A549 (cell line): ENCODE measurements at regions of chr20 and their contacts with region 1.

Region 1: GRCh38 chr20:24917797-24918578 is 31.1 kb upstream of the CST7 start:
- DNase-seq: peak; percentile 73 to 80
- ATAC-seq: peak; percentile 77 to 98
- H3K4me3 ChIP-seq: no peak overlapping the region
- H3K27ac ChIP-seq: peak overlapping the region in 1 of 2 experiments; percentile 50; a peak in 1 of 6 replicates
- H3K4me1 ChIP-seq: no peaks in the 10 kb centered on the region
- CTCF ChIP-seq: peak; percentile 88
- EP300 ChIP-seq: no peak
- POLR2A ChIP-seq: no peak
- RAD21 ChIP-seq: peak; percentile 98

Region 2: DNA sequence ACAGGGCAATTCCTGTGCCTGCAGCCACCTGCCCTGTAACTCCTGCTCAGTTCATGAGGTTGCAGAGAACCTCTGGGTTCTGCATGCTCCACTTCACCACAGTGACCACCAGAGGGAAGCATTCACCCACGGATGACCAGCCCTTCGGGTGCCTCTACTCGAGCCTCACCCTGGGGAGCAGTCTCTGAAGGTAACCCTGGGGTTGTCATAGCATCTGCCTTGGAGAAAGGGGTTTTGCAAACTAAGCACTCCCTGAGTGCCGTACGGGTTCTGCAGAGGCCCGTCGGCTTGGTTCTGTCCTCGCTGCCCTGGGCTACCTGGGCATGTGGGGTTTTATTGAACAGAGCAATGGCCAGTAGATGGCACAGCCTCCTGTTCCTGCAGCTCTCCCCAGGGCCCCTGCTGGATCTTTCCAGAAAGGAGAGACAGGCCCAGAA is 1028.2 kb before region 1 on chr20:
- CTCF ChIA-PET with region 1: interaction called, 15 read pairs
- POLR2A ChIA-PET with region 1: no interaction called
- DNase-seq: peak; percentile 63 to 68
- ATAC-seq: peak; percentile 98 to 100
- H3K4me3 ChIP-seq: no peak overlapping the region
- H3K27ac ChIP-seq: no peak overlapping the region
- H3K4me1 ChIP-seq: no peaks in the 10 kb centered on the region
- CTCF ChIP-seq: peak; percentile 90
- EP300 ChIP-seq: no peak
- POLR2A ChIP-seq: no peak
- RAD21 ChIP-seq: peak; percentile 90

Region 3: GRCh38 chr20:24100385-24101011 is 817.5 kb before region 1 on chr20:
- CTCF ChIA-PET with region 1: interaction called, 15 read pairs
- POLR2A ChIA-PET with region 1: no interaction called
- DNase-seq: peak in 1 of 2 experiments; percentile 77
- ATAC-seq: peak; percentile 76 to 88
- H3K4me3 ChIP-seq: no peak overlapping the region
- H3K27ac ChIP-seq: peak overlapping the region in 1 of 2 experiments; percentile 27; a peak in 1 of 6 replicates
- H3K4me1 ChIP-seq: peaks cover 41% of the 10 kb centered on the region
- CTCF ChIP-seq: peak; percentile 58
- EP300 ChIP-seq: no peak
- POLR2A ChIP-seq: no peak
- RAD21 ChIP-seq: peak; percentile 29 to 63; a peak in 3 of 5 replicates

Region 4: GRCh38 chr20:24658920-24659660 is 258.9 kb before region 1 on chr20:
- CTCF ChIA-PET with region 1: no interaction called
- POLR2A ChIA-PET with region 1: no interaction called
- DNase-seq: no peak
- ATAC-seq: no peak
- H3K4me3 ChIP-seq: no peak overlapping the region
- H3K27ac ChIP-seq: no peak overlapping the region
- H3K4me1 ChIP-seq: peaks cover 17% of the 10 kb centered on the region
- CTCF ChIP-seq: no peak
- EP300 ChIP-seq: no peak
- POLR2A ChIP-seq: no peak
- RAD21 ChIP-seq: no peak

Region 5: GRCh38 chr20:24781422-24781980 is 136.5 kb before region 1 on chr20:
- CTCF ChIA-PET with region 1: interaction called, 13 read pairs
- POLR2A ChIA-PET with region 1: no interaction called
- DNase-seq: peak; percentile 40 to 51
- ATAC-seq: peak; percentile 84 to 93
- H3K4me3 ChIP-seq: no peak overlapping the region
- H3K27ac ChIP-seq: peak overlapping the region in 1 of 2 experiments; percentile 20; a peak in 1 of 6 replicates
- H3K4me1 ChIP-seq: no peaks in the 10 kb centered on the region
- CTCF ChIP-seq: peak; percentile 69
- EP300 ChIP-seq: no peak
- POLR2A ChIP-seq: no peak
- RAD21 ChIP-seq: peak; percentile 91 to 92

Region 6: GRCh38 chr20:24899153-24899552 is 18.8 kb before region 1 on chr20:
- CTCF ChIA-PET with region 1: interaction called, 11 read pairs
- POLR2A ChIA-PET with region 1: no interaction called
- DNase-seq: no peak
- ATAC-seq: no peak
- H3K4me3 ChIP-seq: no peak overlapping the region
- H3K27ac ChIP-seq: no peak overlapping the region
- H3K4me1 ChIP-seq: no peaks in the 10 kb centered on the region
- CTCF ChIP-seq: no peak
- EP300 ChIP-seq: no peak
- POLR2A ChIP-seq: no peak
- RAD21 ChIP-seq: no peak

Region 7: GRCh38 chr20:24981790-24982189 is 63.8 kb after region 1 on chr20:
- CTCF ChIA-PET with region 1: no interaction called
- POLR2A ChIA-PET with region 1: no interaction called
- DNase-seq: no peak
- ATAC-seq: no peak
- H3K4me3 ChIP-seq: no peak overlapping the region
- H3K27ac ChIP-seq: no peak overlapping the region
- H3K4me1 ChIP-seq: no peaks in the 10 kb centered on the region
- CTCF ChIP-seq: no peak
- EP300 ChIP-seq: no peak
- POLR2A ChIP-seq: no peak
- RAD21 ChIP-seq: no peak